Activated CD4-positive, alpha-beta memory T cell treated with anti-CD3 and anti-CD28 coated beads for 36 hours (primary cell): ENCODE measurements at regions of chr1 and their contacts with region 1.

Region 1: GRCh38 chr1:167066333-167067122 is 23.6 kb downstream of the GPA33 start:
- DNase-seq: peak; percentile 83
- H3K4me3 Mint-ChIP-seq: peak overlapping the region; percentile 30
- H3K27ac Mint-ChIP-seq: no peak overlapping the region
- H3K4me1 Mint-ChIP-seq: peaks cover 2% of the 10 kb centered on the region
- H3K27me3 Mint-ChIP-seq: no peaks in the 10 kb centered on the region

Region 2: DNA sequence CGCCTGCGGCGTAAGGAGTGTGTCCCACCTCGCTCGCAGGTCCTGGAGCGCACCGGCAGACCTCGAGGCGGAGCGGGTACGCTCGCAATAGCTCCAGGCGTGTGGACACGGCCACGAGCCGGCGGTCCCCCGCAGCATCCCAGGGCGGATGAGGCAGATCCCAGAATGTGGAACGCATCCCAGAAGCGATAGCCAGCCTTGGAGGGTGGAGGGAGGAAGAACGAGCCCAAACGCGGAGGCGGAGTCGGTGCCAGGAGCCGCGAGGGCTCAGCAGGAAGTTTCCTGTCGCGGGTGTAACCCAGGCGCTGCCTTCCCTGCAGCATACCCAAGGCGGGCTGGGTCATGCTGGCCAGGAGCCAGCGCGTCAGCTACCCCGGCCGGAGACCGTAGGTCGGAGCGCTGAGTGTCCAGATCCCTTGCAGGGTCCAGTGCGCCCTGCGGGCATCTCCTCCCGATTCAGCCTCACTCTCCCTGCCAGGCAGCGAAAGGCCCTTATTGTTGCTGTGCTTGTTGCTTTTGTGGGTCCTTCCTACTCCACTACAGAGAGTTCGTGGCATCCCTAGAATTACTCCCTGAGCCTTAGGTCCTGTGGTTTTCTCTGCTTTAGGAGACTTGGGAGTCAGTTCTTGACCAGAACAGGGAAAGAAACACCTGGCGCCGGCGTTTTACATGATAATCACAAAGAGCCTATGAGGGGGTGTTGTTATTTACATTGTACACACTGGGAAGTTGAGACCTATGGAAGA is 55.0 kb after region 1 on chr1:
- CTCF ChIA-PET with region 1: interaction called, 16 read pairs
- POLR2A ChIA-PET with region 1: no interaction called
- intact Hi-C with region 1: loop called (anchors 1 kb)
- DNase-seq: peak; percentile 51
- H3K4me3 Mint-ChIP-seq: peak overlapping the region; percentile 74
- H3K27ac Mint-ChIP-seq: no peak overlapping the region
- H3K4me1 Mint-ChIP-seq: peaks cover 5% of the 10 kb centered on the region
- H3K27me3 Mint-ChIP-seq: no peaks in the 10 kb centered on the region

Region 3: GRCh38 chr1:167128261-167129227 is 62.0 kb after region 1 on chr1:
- CTCF ChIA-PET with region 1: interaction called, 16 read pairs
- POLR2A ChIA-PET with region 1: no interaction called
- intact Hi-C with region 1: loop called (anchors 1 kb)
- DNase-seq: no peak
- H3K4me3 Mint-ChIP-seq: no peak overlapping the region
- H3K27ac Mint-ChIP-seq: no peak overlapping the region
- H3K4me1 Mint-ChIP-seq: no peaks in the 10 kb centered on the region
- H3K27me3 Mint-ChIP-seq: peaks cover 17% of the 10 kb centered on the region

Region 4: GRCh38 chr1:167207940-167208623 is 141.6 kb after region 1 on chr1:
- CTCF ChIA-PET with region 1: interaction called, 8 read pairs
- POLR2A ChIA-PET with region 1: no interaction called
- intact Hi-C with region 1: loop called (anchors 5 kb)
- DNase-seq: no peak
- H3K4me3 Mint-ChIP-seq: no peak overlapping the region
- H3K27ac Mint-ChIP-seq: peak overlapping the region; percentile 95
- H3K4me1 Mint-ChIP-seq: peaks cover 38% of the 10 kb centered on the region
- H3K27me3 Mint-ChIP-seq: peaks cover 5% of the 10 kb centered on the region

Region 5: GRCh38 chr1:167599957-167600581 is 533.5 kb after region 1 on chr1:
- CTCF ChIA-PET with region 1: no interaction called
- POLR2A ChIA-PET with region 1: no interaction called
- intact Hi-C with region 1: no loop called
- DNase-seq: peak; percentile 53
- H3K4me3 Mint-ChIP-seq: peak overlapping the region; percentile 61
- H3K27ac Mint-ChIP-seq: peak overlapping the region; percentile 64
- H3K4me1 Mint-ChIP-seq: peaks cover 37% of the 10 kb centered on the region
- H3K27me3 Mint-ChIP-seq: no peaks in the 10 kb centered on the region